ENCODE measurements at regions of chr16 and their contacts with region 1.

Region 1: DNA sequence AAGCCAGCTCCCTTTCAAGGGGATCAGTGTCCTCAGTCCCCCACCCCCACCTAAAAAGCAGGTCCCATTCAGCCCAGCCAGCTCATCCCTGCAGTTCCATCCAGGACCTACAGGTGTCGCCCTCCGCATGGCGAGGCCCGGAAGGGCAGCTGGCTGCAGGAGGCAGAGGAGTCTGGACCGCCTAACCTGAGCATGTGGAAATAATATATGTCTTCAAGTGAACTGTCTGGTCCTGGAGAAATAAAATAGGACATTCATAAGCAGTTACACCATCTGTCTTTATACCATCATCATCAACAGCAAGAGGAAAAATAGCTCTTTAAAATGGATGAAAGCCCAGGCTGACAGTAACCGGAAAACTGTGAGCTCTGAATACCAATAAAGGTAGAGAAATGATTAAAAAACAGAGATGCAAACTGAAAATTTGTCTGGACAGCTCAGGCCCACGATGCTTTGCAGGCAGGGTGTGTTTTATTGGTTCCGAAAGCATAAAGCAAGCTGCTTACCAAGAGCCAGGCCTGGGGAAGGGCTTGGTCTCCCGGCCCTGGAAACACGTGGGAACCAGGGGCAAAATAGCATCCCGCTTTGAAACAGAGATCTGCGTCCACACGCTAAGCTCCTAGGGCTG is 215.2 kb downstream of the ZFHX3 start:
- DNase-seq: peak; percentile 67
- H3K4me3 Mint-ChIP-seq: no peak overlapping the region
- H3K27ac Mint-ChIP-seq: no peak overlapping the region
- H3K4me1 Mint-ChIP-seq: peaks cover 4% of the 10 kb centered on the region
- H3K27me3 Mint-ChIP-seq: peaks cover 2% of the 10 kb centered on the region

Region 2: DNA sequence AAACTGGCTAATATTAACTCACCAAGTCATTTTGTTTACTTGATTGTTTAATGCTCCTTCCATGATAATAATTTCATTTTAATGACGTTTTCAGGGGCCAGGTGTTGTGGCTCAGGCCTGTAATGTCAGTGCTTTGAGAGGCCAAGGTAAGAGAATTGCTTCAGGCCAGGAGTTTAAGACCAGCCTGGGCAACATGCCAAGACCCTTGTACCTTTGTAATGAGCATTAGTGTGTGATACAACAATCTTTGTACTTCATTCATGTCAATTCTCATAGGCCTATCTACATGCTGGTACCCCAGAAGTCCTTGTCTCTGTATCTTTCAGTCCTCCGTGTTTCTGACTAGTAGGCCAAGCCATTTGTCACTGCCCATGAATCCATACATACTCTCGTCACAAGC is 81.7 kb before region 1 on chr16:
- CTCF ChIA-PET with region 1: no interaction called
- POLR2A ChIA-PET with region 1: no interaction called
- DNase-seq: no peak
- H3K4me3 Mint-ChIP-seq: no peak overlapping the region
- H3K27ac Mint-ChIP-seq: no peak overlapping the region
- H3K4me1 Mint-ChIP-seq: no peaks in the 10 kb centered on the region
- H3K27me3 Mint-ChIP-seq: no peaks in the 10 kb centered on the region

Region 3: GRCh38 chr16:72818236-72818845 is 14.4 kb before region 1 on chr16:
- CTCF ChIA-PET with region 1: interaction called, 17 read pairs
- POLR2A ChIA-PET with region 1: no interaction called
- DNase-seq: no peak
- H3K4me3 Mint-ChIP-seq: no peak overlapping the region
- H3K27ac Mint-ChIP-seq: no peak overlapping the region
- H3K4me1 Mint-ChIP-seq: no peaks in the 10 kb centered on the region
- H3K27me3 Mint-ChIP-seq: no peaks in the 10 kb centered on the region

Region 4: DNA sequence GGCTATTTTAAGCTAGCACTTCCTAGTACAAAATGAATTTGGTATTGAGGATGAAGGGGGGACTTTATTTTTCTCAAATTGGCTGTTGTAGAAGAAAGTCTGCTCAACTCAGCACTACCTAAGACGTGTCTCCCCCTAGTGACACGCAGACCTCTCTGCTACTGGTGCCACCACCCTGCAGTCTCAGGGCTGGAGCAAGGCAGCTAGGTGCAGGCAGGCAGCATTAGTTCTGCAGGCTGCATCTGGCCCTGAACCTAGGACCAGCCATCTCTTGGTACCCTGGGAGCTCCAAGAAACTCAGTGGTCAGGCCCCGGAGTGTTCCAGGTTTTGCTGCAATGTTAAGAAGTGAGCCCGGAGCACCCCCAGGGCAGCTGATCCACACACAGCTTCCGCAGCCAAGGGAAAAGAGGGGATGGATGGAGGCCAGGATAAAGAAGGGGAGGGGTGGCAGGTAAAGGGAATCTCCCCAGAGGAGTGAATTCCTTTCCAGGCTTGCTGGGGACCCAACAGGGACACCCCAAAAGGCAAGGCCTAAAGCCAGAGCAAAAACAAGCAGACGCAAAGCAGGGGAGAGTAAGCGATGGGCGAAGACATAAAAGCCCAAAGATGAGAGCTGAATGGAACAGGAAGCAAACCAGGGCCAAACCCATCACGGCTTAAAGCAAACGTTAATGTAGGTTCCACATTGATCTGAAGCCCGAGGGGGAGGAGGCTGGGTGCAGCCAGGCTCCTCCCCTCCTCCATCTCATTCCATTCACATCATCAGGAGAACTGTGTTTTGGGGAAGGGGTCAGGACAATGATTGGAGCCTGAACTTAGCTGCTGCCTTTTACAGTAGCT is 14.7 kb after region 1 on chr16:
- CTCF ChIA-PET with region 1: interaction called, 30 read pairs
- POLR2A ChIA-PET with region 1: no interaction called
- DNase-seq: peak; percentile 22
- H3K4me3 Mint-ChIP-seq: no peak overlapping the region
- H3K27ac Mint-ChIP-seq: no peak overlapping the region
- H3K4me1 Mint-ChIP-seq: peaks cover 21% of the 10 kb centered on the region
- H3K27me3 Mint-ChIP-seq: no peaks in the 10 kb centered on the region

Region 5: GRCh38 chr16:72856797-72857196 is 24.1 kb after region 1 on chr16:
- CTCF ChIA-PET with region 1: interaction called, 20 read pairs
- POLR2A ChIA-PET with region 1: interaction called, 3 read pairs
- DNase-seq: peak; percentile 24
- H3K4me3 Mint-ChIP-seq: no peak overlapping the region
- H3K27ac Mint-ChIP-seq: no peak overlapping the region
- H3K4me1 Mint-ChIP-seq: peaks cover 2% of the 10 kb centered on the region
- H3K27me3 Mint-ChIP-seq: peaks cover 3% of the 10 kb centered on the region

Region 6: DNA sequence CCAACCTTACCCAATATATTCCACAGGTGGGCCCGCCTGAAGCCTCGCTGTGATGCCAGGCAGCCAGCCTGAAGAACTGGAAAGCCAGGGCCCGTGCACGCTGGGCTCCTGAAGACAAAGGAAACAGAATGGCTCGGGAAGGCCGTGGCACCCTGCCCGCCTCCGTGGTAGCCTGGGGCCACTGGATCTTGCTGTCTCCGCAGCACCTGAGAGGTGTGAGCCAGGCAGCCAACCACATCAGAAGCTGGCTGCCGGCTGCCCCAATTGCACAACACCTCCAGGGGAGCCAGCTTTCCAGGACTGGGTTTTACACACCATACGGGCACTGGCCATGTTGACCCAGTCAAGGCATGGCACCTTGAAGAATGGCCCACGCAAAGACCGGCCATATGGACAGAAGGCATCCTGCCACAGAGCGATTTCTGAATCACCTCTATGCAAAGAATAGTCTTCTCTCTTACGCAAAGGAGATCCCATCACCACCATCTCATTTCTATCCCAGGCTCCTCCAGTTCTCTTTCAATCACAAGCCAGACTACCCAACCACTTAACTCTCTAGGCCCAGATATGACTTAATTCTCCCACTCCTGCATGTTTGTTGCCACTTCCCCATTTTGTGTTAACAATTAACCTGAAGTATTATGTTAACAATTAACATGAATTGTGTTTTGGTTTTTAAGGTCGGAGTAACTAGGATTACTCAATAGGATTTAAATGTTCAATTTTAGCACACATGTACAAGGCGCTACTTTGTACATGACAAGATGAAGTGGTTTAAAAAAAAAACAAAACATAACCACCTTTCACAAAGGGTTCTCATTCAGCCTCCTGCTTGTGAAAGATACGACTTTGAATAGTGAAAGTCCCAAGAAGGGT is 183.1 kb after region 1 on chr16:
- CTCF ChIA-PET with region 1: no interaction called
- POLR2A ChIA-PET with region 1: no interaction called
- DNase-seq: no peak
- H3K4me3 Mint-ChIP-seq: no peak overlapping the region
- H3K27ac Mint-ChIP-seq: no peak overlapping the region
- H3K4me1 Mint-ChIP-seq: no peaks in the 10 kb centered on the region
- H3K27me3 Mint-ChIP-seq: no peaks in the 10 kb centered on the region

Region 7: GRCh38 chr16:73196670-73197069 is 363.9 kb after region 1 on chr16:
- CTCF ChIA-PET with region 1: interaction called, 18 read pairs
- POLR2A ChIA-PET with region 1: no interaction called
- DNase-seq: peak; percentile 17
- H3K4me3 Mint-ChIP-seq: no peak overlapping the region
- H3K27ac Mint-ChIP-seq: no peak overlapping the region
- H3K4me1 Mint-ChIP-seq: no peaks in the 10 kb centered on the region
- H3K27me3 Mint-ChIP-seq: no peaks in the 10 kb centered on the region

Measured in activated CD4-positive, alpha-beta memory T cell treated with anti-CD3 and anti-CD28 coated beads, Interleukin-2, amount 10 ng/mL, durations not matched to agents 7 days and 5 days (primary cell).